MCF 10A (cell line): ENCODE measurements at regions of chr10 and their contacts with region 1.

Region 1: DNA sequence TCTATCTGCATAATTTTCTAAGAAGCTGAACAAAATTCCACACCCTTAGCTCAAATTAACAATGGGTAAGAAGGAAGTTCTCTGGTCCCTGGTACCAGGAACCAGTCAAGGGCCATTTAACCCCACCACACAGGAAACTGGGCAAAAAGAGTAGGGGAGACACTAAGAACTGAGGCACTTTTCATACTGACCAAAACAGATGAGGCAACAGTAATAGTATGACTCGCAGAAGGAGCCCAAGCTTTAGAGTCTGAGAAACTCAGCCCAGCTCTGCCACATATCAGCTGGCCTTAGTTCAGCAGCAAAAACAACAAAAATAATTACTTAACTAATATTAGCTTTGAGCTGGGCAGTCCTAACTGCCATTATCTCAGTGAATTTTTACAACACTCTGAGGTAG is 221.2 kb downstream of the FAM107B start:
- DNase-seq: peak; percentile 38
- H3K4me3 Mint-ChIP-seq: no peak overlapping the region
- H3K27ac Mint-ChIP-seq: no peak overlapping the region
- H3K4me1 Mint-ChIP-seq: peaks cover 15% of the 10 kb centered on the region
- H3K27me3 Mint-ChIP-seq: no peaks in the 10 kb centered on the region
- CTCF ChIP-seq: no peak

Region 2: GRCh38 chr10:14528450-14528849 is 25.0 kb before region 1 on chr10:
- CTCF ChIA-PET with region 1: no interaction called
- POLR2A ChIA-PET with region 1: no interaction called
- intact Hi-C with region 1: no loop called
- DNase-seq: no peak
- H3K4me3 Mint-ChIP-seq: no peak overlapping the region
- H3K27ac Mint-ChIP-seq: no peak overlapping the region
- H3K4me1 Mint-ChIP-seq: no peaks in the 10 kb centered on the region
- H3K27me3 Mint-ChIP-seq: no peaks in the 10 kb centered on the region
- CTCF ChIP-seq: no peak

Region 3: DNA sequence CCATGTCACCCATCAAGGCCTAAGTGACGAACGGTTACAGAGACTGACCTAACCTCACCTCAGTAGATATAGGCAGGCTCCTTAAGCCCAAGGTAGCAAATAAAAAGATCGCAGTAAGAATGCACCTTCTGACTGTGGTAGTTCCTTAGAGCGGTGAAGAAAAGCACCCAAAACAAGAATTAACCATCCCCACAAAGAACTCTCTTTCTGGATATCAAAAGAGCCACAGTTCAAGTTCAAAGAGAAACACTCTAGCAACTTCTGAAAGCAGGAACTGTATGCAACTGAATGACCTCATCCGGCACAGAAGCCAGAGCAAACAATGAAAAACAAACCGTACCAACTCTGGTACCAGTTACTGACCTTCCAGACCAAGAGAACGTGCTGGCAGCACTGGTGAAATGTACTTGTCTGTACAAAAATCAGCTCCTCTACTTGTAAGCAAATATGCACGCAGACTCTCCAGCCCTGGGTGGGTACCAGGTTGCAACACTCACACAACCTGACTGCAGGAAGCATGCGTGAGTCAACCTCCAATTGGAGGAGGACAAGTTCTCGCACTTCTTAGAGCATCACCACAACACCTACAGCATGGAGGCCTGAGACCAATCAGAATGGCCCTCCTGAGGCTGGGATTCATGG is 18.5 kb after region 1 on chr10:
- CTCF ChIA-PET with region 1: no interaction called
- POLR2A ChIA-PET with region 1: interaction called, 4 read pairs
- intact Hi-C with region 1: loop called (anchors 2 kb)
- DNase-seq: peak; percentile 69
- H3K4me3 Mint-ChIP-seq: peak overlapping the region; percentile 41
- H3K27ac Mint-ChIP-seq: peak overlapping the region; percentile 87
- H3K4me1 Mint-ChIP-seq: peaks cover 15% of the 10 kb centered on the region
- H3K27me3 Mint-ChIP-seq: no peaks in the 10 kb centered on the region
- CTCF ChIP-seq: no peak